Activated naive CD8-positive, alpha-beta T cell treated with anti-CD3 and anti-CD28 coated beads, Interleukin-2, amount 10 ng/mL, durations not matched to agents 7 days and 5 days (primary cell): ENCODE measurements at regions of chr3 and their contacts with region 1.

Region 1: DNA sequence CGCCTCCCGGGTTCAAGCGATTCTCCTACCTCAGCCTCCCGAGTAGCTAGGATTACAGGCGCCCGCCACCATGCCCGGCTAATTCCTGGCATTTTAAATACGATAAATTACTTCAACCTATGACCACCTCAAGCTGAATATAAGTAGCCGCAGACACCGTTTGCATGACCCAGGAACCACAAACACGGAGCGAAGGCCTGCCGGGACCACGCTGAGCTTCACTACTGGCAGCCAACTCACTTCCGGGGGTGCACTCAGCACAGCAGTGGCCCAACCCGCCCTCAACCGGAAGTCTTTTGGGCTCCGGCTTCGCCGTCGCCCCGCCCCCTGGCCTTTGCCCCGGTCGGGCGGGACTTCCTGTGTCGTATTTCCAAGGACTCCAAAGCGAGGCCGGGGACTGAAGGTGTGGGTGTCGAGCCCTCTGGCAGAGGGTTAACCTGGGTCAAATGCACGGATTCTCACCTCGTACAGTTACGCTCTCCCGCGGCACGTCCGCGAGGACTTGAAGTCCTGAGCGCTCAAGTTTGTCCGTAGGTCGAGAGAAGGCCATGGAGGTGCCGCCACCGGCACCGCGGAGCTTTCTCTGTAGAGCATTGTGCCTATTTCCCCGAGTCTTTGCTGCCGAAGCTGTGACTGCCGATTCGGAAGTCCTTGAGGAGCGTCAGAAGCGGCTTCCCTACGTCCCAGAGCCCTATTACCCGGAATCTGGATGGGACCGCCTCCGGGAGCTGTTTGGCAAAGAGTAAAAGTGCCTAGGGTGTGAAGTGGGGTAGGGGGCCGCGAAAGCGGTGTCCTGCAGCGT is at the start of gene TIMMDC1:
- DNase-seq: peak; percentile 97
- ATAC-seq: peak; percentile 98
- H3K4me3 Mint-ChIP-seq: peak within 1 kb of the TSS; percentile 99
- H3K27ac Mint-ChIP-seq: peak within 1 kb of the TSS; percentile 99
- H3K4me1 Mint-ChIP-seq: peaks cover 17% of the 10 kb centered on the region
- H3K27me3 Mint-ChIP-seq: no peaks in the 10 kb centered on the region
- total RNA-seq, gene TIMMDC1: 72.9 to 76.0 TPM

Region 2: DNA sequence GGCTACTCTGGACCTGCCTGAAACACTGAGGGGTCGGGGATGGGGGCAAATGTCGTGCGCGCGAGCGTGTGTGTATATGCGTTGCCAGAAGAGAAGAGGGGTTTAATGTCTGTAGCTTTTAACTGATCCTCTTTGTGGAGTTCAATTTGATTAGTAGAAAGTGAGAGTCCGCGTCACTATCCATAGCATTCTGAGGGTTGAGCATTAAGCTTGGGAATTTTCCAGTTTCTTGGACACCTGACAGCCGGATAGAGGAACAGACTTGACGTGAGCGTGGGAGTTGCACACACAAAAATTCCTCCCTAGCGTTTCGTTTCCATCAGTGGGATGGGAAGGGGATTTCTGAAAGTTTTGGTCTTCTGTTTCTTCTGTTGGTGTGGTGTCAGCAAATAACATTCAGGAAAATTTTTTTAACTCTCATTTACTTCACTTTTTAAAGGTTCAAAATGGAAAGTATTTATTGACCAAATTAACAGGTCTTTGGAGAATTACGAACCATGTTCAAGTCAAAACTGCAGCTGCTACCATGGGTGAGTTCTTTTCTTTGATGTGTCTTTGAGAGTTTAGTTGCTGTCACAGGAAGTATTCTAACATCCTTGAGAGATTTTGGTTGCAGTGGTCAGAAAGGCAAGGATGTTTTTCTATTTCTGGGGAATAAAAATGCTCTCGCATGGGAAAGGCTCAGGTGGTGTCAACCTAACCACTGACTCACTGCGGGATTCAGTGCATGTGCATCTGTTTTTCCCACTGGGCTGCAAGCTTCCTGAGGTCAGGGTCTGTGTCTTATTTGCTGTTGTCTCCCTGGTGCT is 28.8 kb before region 1 on chr3:
- POLR2A ChIA-PET with region 1: interaction called, 56 read pairs
- DNase-seq: no peak
- ATAC-seq: peak; percentile 44
- H3K4me3 Mint-ChIP-seq: peak overlapping the region; percentile 95
- H3K27ac Mint-ChIP-seq: peak overlapping the region; percentile 93
- H3K4me1 Mint-ChIP-seq: peaks cover 24% of the 10 kb centered on the region
- H3K27me3 Mint-ChIP-seq: no peaks in the 10 kb centered on the region

Region 3: GRCh38 chr3:119559441-119559963 is 61.1 kb after region 1 on chr3 and contains the start of gene CD80:
- POLR2A ChIA-PET with region 1: interaction called, 40 read pairs
- DNase-seq: peak; percentile 68
- ATAC-seq: peak; percentile 91
- H3K4me3 Mint-ChIP-seq: peak within 1 kb of the TSS; percentile 83
- H3K27ac Mint-ChIP-seq: peak within 1 kb of the TSS; percentile 85
- H3K4me1 Mint-ChIP-seq: peaks cover 46% of the 10 kb centered on the region
- H3K27me3 Mint-ChIP-seq: no peaks in the 10 kb centered on the region
- total RNA-seq, gene CD80: 11.6 to 15.2 TPM

Region 4: DNA sequence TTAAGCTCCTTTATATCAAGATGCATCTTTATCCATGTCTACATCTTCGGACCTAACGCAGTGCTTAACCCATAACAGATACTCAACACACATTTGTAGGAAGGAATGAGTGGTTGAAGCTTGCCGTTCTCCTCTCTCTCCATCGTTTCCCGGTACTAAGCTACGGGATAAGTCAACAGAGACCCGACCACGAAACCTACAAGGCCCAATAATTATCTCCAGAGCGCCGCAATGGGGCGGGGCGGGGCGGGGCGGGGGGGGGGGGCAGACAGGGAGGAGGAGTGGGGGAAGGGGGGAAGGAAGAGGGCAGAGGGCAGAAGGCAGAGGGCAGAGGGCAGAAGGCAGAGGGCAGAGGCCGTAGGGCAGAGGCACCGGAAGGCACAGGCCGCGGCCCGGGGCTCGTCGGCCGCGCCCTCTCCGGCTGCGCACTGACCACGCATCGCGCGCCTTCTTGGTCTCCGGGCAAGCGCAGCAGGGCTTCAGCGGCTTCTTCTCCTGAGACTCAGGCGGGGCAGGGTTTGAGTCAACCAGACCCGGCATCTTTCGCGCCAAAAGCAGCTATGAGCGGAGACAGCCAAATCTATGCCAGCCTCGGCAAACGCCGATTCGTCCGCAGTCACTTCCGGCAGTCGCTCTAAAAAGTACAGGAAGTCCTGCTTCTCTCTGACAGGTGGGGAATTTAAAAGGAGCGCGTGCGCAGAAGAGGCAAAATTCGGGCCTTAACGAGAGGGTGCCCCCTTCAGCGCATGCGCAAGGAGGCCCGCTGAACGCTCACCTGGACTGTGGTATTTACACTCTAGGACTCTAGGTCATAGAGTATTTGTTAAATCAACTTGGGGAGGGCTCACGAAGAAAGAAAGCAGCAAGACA is 178.6 kb after region 1 on chr3 and contains the start of gene COX17:
- POLR2A ChIA-PET with region 1: interaction called, 12 read pairs
- DNase-seq: peak; percentile 91
- ATAC-seq: peak; percentile 92
- H3K4me3 Mint-ChIP-seq: peak within 1 kb of the TSS; percentile 87
- H3K27ac Mint-ChIP-seq: peak within 1 kb of the TSS; percentile 97
- H3K4me1 Mint-ChIP-seq: peaks cover 32% of the 10 kb centered on the region
- H3K27me3 Mint-ChIP-seq: no peaks in the 10 kb centered on the region
- total RNA-seq, gene COX17: 55.7 to 59.9 TPM

Region 5: DNA sequence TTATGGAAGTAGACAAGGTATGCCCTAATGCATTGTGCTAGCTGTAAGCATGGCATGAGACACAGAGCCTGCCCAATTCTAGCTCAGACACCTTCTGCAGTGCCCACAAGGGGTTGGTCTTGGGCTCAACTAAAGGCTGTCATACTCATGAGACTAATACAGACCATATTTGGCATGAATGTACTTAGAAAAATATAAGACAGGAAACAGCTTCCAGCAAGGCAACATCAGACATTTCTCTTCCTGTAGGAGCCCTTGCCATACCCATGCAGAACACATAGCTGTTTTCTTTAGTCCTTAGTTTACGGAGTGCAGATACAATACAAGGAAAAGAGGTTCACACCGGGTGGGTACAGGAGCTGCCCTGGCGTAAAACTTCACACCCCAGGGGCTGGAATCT is 253.0 kb after region 1 on chr3:
- POLR2A ChIA-PET with region 1: no interaction called
- DNase-seq: no peak
- ATAC-seq: no peak
- H3K4me3 Mint-ChIP-seq: no peak overlapping the region
- H3K27ac Mint-ChIP-seq: no peak overlapping the region
- H3K4me1 Mint-ChIP-seq: no peaks in the 10 kb centered on the region
- H3K27me3 Mint-ChIP-seq: peaks cover 36% of the 10 kb centered on the region